ENCODE measurements at regions of chr9 and their contacts with region 1.

Region 1: GRCh38 chr9:129656795-129657390 is 8.6 kb upstream of the PRRX2 start:
- DNase-seq: no peak
- H3K4me3 ChIP-seq: no peak overlapping the region
- H3K27ac ChIP-seq: no peak overlapping the region
- H3K4me1 ChIP-seq: no peaks in the 10 kb centered on the region
- H3K27me3 ChIP-seq: no peaks in the 10 kb centered on the region
- CTCF ChIP-seq: no peak
- POLR2A ChIP-seq: no peak

Region 2: DNA sequence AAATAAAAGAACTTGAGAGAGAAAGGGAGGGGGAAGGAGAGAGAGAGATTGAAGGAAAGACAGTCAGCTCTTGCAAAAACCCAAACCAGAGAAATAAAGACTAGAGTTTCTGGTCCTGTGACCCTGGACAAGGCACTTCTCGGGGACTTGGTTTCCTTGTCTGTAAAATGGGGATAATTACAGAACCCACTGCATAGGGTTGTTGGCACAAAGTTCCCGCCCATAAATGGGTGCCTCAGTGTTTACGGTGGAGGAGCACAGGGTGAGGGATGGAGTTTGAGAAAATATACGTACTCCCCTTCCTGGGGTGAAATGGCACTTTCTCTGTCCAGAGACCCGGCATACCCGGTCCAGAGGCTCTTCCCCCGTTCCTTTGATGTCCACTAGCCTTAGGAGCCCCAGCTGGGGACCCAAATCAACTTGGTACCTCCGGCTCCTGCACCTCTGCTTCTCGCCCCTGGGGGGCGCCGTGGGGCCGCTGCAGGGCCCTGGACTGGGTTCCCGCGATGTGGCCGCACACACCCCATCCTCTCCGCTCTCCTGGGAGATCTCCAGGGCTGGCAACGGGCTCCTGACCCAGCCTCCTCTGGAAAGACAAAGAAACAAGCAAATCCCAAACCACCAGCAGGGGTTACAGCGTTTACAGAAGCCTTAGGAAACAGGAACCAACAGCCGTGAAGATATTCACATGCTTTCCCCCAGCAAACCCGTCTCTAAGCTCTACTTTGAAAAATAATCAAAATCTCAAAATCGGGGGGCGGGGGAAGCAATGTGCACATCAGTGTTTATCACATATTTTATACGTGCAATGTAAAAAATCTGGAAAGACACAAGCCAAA is 69.6 kb after region 1 on chr9:
- intact Hi-C with region 1: loop called (anchors 10 kb)
- DNase-seq: peak; percentile 54 to 77
- H3K4me3 ChIP-seq: no peak overlapping the region
- H3K27ac ChIP-seq: peak overlapping the region in 1 of 2 donors; percentile 34
- H3K4me1 ChIP-seq: no peaks in the 10 kb centered on the region
- H3K27me3 ChIP-seq: no peaks in the 10 kb centered on the region
- CTCF ChIP-seq: peak; percentile 76 to 83 (median 78)
- POLR2A ChIP-seq: no peak

Region 3: DNA sequence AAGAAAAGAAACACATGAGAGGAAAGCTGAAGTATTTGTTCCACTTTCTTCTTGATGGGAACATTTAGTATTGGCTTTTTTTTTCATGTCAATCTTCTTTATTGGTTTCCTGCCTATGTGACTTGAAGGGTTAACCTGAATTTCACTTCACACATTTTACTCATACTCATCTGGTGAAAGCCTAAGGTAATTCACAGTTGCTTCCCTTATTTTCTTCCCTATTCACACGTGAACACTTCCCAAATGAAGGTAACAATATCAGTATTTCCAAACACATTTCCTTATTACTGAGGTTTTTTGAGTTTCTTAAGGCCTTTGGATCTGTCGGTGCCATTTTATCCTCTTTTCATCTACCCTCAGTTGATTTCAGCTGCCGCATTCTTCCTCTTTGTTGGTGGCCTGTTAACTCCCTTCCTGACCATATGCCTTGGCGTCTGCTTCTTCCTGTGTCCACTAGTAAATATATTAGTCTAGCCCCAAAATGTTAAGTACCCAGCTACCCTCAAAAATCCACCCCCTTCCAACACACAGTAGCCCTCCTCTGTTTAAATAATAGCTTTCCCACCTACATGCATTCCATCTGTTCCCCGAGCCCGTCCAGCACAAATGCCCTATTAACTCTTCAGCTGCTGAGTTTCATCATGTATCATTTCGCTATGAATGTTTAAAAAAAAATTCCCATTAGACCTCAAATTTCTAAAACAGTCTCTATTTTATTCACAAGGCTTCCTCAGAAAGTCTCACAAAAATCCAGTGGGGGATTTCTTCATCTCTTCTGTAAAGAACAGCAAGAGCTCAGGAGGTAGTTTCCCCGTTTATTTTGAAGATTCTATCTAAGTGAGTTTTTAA is 275.6 kb after region 1 on chr9:
- intact Hi-C with region 1: no loop called
- DNase-seq: no peak
- H3K4me3 ChIP-seq: peak overlapping the region in 1 of 2 donors; percentile 0
- H3K27ac ChIP-seq: peak overlapping the region; percentile 74 to 90
- H3K4me1 ChIP-seq: peaks cover 0 to 6% of the 10 kb centered on the region in 2 donors
- H3K27me3 ChIP-seq: no peaks in the 10 kb centered on the region
- CTCF ChIP-seq: no peak
- POLR2A ChIP-seq: no peak

Measured in uterus (tissue), 4 donors.